ENCODE measurements at regions of chr11 and their contacts with region 1.

Region 1: DNA sequence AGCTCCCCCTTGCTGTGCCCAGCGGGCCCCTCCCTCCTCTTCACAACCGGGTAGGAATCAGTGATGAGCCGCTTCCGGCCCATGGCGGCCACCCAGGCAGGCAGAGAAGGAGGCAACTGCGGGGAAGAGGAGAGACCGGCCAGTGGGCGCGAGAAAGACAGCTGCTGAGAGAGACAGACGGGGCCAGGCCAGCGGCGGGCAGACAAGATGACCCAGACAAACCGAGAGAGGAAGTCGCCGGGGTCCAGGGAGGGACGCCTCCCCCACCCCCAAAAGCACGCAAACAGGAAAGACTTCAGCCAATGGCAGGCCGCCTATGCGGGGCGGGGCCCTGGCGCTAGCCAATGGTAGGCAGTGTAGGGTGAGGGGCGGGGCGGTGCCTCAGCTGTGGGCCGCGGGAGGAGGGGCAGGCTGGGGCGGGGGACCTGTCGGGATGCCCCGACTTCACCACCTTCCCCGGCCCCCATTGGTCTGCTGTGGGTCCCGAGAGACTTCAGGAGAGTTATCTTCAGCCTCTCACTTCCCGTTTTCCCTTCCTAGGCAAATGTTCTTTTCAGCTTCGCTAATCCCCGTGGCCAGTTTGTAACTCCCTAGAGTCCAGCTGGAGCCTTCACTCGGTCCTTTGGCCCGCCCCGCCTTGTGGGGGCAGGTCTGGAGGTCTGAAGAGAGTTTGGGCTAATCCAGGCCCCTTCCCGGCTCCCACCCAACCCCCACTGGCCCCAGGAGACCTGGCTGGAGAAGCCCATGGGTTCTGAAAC is at the start of gene POLD4:
- DNase-seq: peak; percentile 97
- H3K4me3 Mint-ChIP-seq: peak within 1 kb of the TSS; percentile 94
- H3K27ac Mint-ChIP-seq: peak within 1 kb of the TSS; percentile 99
- H3K4me1 Mint-ChIP-seq: peaks cover 50% of the 10 kb centered on the region
- H3K27me3 Mint-ChIP-seq: peaks cover 5% of the 10 kb centered on the region
- total RNA-seq, gene POLD4: 74.0 to 74.1 TPM

Region 2: DNA sequence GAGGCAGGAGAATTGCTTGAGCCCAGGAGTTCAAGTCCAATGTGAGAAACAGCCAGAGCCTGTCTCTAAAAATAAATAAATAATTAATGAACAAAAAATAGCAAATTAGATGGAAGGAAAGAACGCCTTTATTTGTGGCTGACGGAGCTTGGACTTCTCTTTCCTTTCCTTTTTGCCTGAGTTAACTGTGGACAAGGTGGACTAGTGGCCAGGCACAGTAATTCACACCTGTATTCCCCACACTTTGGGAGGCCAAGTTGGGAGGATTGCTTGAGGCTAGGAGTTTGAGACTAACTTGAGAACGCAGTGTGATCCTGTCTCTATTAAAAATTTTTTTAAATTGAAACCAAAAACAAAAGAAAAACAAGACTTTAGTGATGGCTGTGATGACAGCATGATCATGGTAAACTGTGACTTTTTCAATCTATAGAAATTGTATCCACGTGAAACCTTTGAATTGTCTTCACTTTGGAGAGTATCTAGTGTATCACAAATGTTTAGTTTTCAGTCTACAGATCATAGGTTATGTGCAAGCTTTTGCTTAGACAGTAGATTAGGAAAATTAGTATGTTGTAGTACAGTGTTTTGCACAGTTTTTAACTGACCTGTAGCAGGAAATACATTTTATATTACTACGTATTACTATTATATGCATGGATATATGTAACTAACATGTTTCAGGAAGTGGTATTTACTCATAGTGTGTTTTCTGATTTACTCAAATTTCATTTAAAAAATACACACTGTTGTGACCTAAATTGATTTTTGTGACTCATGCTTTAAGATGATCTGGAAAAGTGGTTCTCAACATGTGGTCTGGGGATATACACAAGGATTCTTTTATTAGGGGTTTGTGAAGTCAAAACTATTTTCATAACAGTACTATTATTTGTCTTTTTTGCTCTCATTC is 192.4 kb before region 1 on chr11:
- CTCF ChIA-PET with region 1: no interaction called
- POLR2A ChIA-PET with region 1: no interaction called
- DNase-seq: no peak
- H3K4me3 Mint-ChIP-seq: no peak overlapping the region
- H3K27ac Mint-ChIP-seq: no peak overlapping the region
- H3K4me1 Mint-ChIP-seq: peaks cover 22% of the 10 kb centered on the region
- H3K27me3 Mint-ChIP-seq: no peaks in the 10 kb centered on the region

Region 3: DNA sequence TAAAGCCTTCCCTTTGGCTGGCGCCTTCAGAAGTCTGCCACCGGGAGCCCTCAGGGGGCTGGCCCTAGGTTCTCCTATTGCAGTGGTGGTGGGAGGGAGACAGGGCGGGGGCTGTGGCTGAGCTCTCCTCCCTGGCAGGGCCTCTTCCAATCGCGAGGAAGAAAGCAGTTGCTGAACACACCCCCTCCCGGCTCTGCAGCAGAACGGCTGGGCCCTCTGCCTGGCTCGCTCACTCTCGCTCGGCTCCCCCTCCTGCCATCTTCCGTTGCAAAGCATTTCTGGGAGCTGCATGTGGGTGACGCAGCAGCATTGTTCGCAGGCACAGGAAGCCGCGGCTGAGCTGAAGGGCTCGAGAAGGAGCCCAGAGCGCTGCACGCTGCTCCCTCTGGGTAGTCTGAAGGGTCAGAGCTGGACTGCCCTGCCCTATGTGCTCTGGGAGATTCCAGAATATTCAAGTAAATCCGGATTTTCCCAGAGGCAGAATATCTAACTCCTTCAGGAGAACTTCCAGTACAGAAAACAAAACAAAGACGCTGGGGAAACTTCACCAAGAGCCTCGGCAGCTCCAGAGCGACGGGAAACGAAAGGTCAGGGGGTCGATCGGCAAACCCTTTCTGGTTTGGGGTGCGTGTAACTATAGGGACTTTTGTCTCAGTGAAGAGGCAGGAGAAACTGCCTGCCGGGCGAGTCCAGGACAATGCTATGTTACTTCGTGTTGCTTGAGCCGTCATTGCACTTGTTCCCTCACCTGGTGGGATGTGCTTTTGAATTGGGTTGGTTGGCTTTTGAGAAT is 113.5 kb before region 1 on chr11:
- CTCF ChIA-PET with region 1: interaction called, 5 read pairs
- POLR2A ChIA-PET with region 1: interaction called, 12 read pairs
- DNase-seq: peak; percentile 97
- H3K4me3 Mint-ChIP-seq: peak overlapping the region; percentile 99
- H3K27ac Mint-ChIP-seq: peak overlapping the region; percentile 96
- H3K4me1 Mint-ChIP-seq: peaks cover 49% of the 10 kb centered on the region
- H3K27me3 Mint-ChIP-seq: no peaks in the 10 kb centered on the region

Region 4: GRCh38 chr11:67317205-67317887 is 36.1 kb before region 1 on chr11:
- CTCF ChIA-PET with region 1: interaction called, 42 read pairs
- POLR2A ChIA-PET with region 1: interaction called, 13 read pairs
- DNase-seq: peak; percentile 99
- H3K4me3 Mint-ChIP-seq: peak overlapping the region; percentile 83
- H3K27ac Mint-ChIP-seq: peak overlapping the region; percentile 96
- H3K4me1 Mint-ChIP-seq: peaks cover 44% of the 10 kb centered on the region
- H3K27me3 Mint-ChIP-seq: no peaks in the 10 kb centered on the region

Region 5: DNA sequence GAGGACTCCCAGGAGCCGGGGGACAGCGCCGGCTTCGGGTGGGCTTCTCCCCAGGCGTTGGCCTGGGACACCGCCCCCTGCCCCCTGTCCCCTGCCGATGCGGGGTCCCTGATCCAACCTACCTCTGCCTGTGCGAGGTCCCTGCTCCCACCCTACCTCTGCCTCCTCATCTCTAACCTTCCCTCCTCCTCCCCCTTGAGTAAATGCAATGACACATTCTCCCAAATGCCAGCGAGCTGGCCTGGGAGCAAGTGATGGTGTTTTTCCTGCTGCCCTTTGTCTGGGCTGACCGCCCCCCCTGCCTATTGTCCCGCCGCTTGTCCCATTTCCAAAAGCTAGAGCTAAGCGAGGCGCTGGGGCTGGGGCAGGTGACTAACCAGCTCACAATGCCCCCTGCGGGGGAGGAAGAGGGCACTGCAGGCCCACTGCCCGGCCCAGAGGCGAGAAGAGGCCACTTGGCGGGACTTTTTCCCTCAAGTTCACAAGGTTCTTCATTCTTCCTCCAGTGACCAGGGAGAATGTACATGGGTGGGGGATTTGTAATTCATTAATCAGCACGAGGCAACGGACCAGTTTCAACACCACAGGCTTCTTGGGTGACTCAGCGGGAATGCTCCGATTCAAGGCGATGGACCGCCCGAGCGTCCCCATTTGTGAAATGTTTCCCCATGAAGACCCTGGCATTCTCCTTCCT is 20.6 kb after region 1 on chr11:
- CTCF ChIA-PET with region 1: interaction called, 847 read pairs
- POLR2A ChIA-PET with region 1: interaction called, 122 read pairs
- DNase-seq: peak; percentile 55
- H3K4me3 Mint-ChIP-seq: peak overlapping the region; percentile 63
- H3K27ac Mint-ChIP-seq: no peak overlapping the region
- H3K4me1 Mint-ChIP-seq: peaks cover 39% of the 10 kb centered on the region
- H3K27me3 Mint-ChIP-seq: peaks cover 63% of the 10 kb centered on the region

Region 6: DNA sequence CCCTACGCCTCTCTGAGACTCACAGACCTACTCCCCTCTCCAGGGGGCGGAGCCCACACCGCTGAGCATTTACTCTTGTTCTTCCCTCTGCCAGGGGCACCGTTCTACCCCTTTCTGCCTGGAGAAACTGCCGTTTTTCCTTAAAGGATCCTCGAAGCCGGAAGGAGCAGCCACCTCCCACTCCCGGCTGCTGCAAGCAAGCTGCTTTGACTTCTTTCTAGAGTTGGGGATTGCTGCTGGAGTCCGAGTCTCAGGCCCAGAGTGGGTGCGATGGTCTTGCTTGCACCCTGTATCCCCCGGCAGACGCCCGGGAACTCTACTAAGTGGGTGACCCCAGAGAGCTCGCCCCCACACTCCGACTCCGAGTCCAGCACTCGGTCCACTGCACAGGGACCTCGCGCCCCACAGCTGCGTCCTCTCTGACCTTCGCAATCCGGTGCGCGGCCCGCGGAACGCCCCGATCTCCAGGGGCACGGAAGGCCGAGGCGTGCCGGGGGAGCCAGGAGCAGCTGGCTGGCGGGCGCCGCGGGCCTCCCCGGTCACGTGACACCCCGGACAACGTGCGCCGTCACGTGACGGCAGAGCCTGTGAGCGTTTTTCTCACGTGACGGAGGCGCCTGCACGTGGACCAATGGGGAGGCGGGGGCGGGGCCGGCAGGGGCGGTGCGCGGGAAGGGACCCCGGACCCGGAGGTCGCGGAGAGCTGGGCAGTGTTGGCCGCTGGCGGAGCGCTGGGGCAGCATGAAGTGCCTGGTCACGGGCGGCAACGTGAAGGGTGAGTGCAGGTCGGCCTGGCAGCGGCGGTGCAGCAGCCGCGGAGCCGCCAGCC is 38.0 kb after region 1 on chr11 and contains the start of gene RAD9A:
- CTCF ChIA-PET with region 1: interaction called, 847 read pairs
- POLR2A ChIA-PET with region 1: interaction called, 23 read pairs
- DNase-seq: peak; percentile 95
- H3K4me3 Mint-ChIP-seq: peak within 1 kb of the TSS; percentile 94
- H3K27ac Mint-ChIP-seq: peak within 1 kb of the TSS; percentile 81
- H3K4me1 Mint-ChIP-seq: peaks cover 44% of the 10 kb centered on the region
- H3K27me3 Mint-ChIP-seq: no peaks in the 10 kb centered on the region
- total RNA-seq, gene RAD9A: 48.0 to 53.9 TPM

Region 7: GRCh38 chr11:67439321-67439883 is 85.9 kb after region 1 on chr11:
- CTCF ChIA-PET with region 1: interaction called, 7 read pairs
- POLR2A ChIA-PET with region 1: interaction called, 31 read pairs
- DNase-seq: peak; percentile 54
- H3K4me3 Mint-ChIP-seq: peak overlapping the region; percentile 94
- H3K27ac Mint-ChIP-seq: peak overlapping the region; percentile 97
- H3K4me1 Mint-ChIP-seq: peaks cover 62% of the 10 kb centered on the region
- H3K27me3 Mint-ChIP-seq: no peaks in the 10 kb centered on the region

Region 8: GRCh38 chr11:67482825-67483798 is 129.6 kb after region 1 on chr11 and contains the start of gene AIP:
- CTCF ChIA-PET with region 1: interaction called, 4 read pairs
- POLR2A ChIA-PET with region 1: interaction called, 19 read pairs
- DNase-seq: peak; percentile 98
- H3K4me3 Mint-ChIP-seq: peak within 1 kb of the TSS; percentile 89
- H3K27ac Mint-ChIP-seq: peak within 1 kb of the TSS; percentile 99
- H3K4me1 Mint-ChIP-seq: peaks cover 55% of the 10 kb centered on the region
- H3K27me3 Mint-ChIP-seq: no peaks in the 10 kb centered on the region
- total RNA-seq, gene AIP: 152 to 159 TPM

Region 9: GRCh38 chr11:67592880-67593564 is 239.5 kb after region 1 on chr11:
- CTCF ChIA-PET with region 1: no interaction called
- POLR2A ChIA-PET with region 1: no interaction called
- DNase-seq: no peak
- H3K4me3 Mint-ChIP-seq: no peak overlapping the region
- H3K27ac Mint-ChIP-seq: no peak overlapping the region
- H3K4me1 Mint-ChIP-seq: no peaks in the 10 kb centered on the region
- H3K27me3 Mint-ChIP-seq: peaks cover 4% of the 10 kb centered on the region